ENCODE measurements at regions of chr1 and their contacts with region 1.

Region 1: GRCh38 chr1:169595764-169596711 is 9.8 kb upstream of the F5 start:
- DNase-seq: peak; percentile 70
- H3K4me3 Mint-ChIP-seq: no peak overlapping the region
- H3K27ac Mint-ChIP-seq: no peak overlapping the region
- H3K4me1 Mint-ChIP-seq: peaks cover 63% of the 10 kb centered on the region
- H3K27me3 Mint-ChIP-seq: no peaks in the 10 kb centered on the region

Region 2: GRCh38 chr1:169460191-169460833 is 135.7 kb before region 1 on chr1:
- CTCF ChIA-PET with region 1: no interaction called
- intact Hi-C with region 1: loop called (anchors 2 kb)
- DNase-seq: peak; percentile 24
- H3K4me3 Mint-ChIP-seq: peak overlapping the region; percentile 49
- H3K27ac Mint-ChIP-seq: no peak overlapping the region
- H3K4me1 Mint-ChIP-seq: peaks cover 25% of the 10 kb centered on the region
- H3K27me3 Mint-ChIP-seq: peaks cover 11% of the 10 kb centered on the region

Region 3: DNA sequence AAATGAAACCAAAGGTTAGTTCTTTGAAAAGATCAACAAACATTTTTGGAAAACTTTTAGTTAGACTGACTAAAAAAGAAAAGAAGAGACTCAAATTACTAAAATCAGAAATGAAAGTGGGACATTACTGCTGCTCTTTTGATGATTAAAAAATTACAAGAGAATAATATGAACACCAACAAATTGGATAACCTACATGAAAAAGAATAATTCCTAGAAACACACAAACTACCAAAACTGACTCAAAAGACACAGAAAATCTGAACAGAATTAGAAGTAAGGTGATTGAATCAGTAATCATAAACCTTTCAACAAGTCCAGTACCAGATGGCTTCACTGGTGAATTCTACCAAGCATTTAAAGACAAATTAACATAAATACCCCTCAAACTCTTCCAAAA is 472.9 kb after region 1 on chr1:
- CTCF ChIA-PET with region 1: no interaction called
- intact Hi-C with region 1: loop called (anchors 2 kb)
- DNase-seq: no peak
- H3K4me3 Mint-ChIP-seq: peak overlapping the region; percentile 13
- H3K27ac Mint-ChIP-seq: peak overlapping the region; percentile 65
- H3K4me1 Mint-ChIP-seq: peaks cover 59% of the 10 kb centered on the region
- H3K27me3 Mint-ChIP-seq: no peaks in the 10 kb centered on the region